ENCODE measurements at regions of chr11 and their contacts with region 1.

Region 1: GRCh38 chr11:114180301-114181055 is 115.7 kb upstream of the NNMT start:
- DNase-seq: peak; percentile 53
- H3K4me3 Mint-ChIP-seq: no peak overlapping the region
- H3K27ac Mint-ChIP-seq: no peak overlapping the region
- H3K4me1 Mint-ChIP-seq: peaks cover 64% of the 10 kb centered on the region
- H3K27me3 Mint-ChIP-seq: no peaks in the 10 kb centered on the region

Region 2: DNA sequence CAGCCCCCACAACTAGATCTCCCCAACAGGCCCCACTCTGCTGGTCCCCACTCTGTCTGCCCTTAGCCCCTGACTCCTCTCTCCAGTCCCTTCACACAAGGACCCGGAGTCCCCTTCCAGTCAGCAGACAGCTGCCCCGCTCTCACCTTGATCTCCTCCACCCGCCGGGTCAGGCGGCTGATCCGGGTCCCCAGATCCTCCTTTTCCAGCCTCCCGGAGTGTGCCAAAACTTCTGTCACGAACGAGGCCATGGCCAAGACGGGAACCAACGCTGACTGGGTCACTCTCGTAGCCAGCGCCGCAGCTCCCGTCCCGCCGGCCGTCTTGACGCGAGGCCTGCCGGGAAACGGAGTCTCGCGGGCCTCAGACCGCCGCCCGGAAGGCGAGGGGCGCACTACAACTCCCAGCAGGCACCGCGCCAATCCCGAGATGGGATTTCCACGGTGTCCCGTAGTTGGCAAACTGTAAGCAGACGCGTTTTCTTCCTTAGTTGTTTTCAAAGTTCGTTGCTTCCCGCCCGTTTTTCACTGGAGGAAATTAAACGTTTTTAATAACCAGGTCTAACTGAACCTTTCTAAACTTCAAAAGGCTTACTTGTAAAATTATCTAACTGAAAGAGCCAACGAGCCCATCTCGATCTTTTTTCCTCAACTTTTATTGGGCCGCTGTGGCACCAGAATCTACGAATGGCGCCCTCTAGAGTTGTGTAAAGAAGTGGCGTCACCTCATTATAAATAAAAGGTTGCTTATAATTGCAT is 406.9 kb before region 1 on chr11 and contains the start of gene ZW10:
- CTCF ChIA-PET with region 1: no interaction called
- intact Hi-C with region 1: loop called (anchors 5 kb)
- DNase-seq: peak; percentile 94
- H3K4me3 Mint-ChIP-seq: peak within 1 kb of the TSS; percentile 100
- H3K27ac Mint-ChIP-seq: peak within 1 kb of the TSS; percentile 96
- H3K4me1 Mint-ChIP-seq: peaks cover 19% of the 10 kb centered on the region
- H3K27me3 Mint-ChIP-seq: no peaks in the 10 kb centered on the region
- total RNA-seq, gene ZW10: 10.7 to 11.6 TPM

Region 3: GRCh38 chr11:113831314-113831713 is 349.2 kb before region 1 on chr11:
- CTCF ChIA-PET with region 1: no interaction called
- intact Hi-C with region 1: no loop called
- DNase-seq: no peak
- H3K4me3 Mint-ChIP-seq: no peak overlapping the region
- H3K27ac Mint-ChIP-seq: no peak overlapping the region
- H3K4me1 Mint-ChIP-seq: no peaks in the 10 kb centered on the region
- H3K27me3 Mint-ChIP-seq: no peaks in the 10 kb centered on the region

Region 4: DNA sequence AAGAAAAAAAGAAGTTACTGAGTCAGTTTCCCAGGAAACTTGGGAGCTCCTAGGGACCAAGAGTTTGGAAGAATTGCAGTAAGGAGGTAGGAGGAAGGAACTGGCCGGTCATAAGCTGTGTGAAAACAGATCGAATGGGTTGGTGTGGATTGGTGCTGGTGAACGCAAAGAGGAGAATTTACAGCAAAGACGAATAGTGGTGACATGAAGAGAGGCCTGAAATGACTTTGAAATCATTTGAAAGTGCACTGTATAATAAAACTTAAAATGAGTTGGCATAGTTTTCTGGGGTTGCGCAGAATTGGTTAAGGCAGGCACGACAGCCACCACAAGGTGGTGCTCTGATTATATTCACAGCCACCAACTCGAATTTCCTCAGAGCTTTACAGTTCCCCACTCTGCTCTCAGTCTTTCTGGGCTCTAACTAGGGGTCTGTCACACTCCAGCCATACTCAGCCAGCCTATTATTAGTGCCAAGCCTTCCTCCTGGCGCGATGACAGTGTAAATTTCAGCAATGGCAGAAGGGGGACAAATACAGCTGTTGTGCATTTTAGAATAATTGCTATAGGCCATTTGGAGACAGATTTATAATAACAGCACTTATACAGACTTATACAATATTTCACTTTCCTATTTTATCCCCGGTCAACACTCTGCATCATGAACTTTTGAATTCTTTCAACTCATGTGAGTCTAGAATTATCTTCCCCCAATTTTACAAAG is 284.2 kb before region 1 on chr11:
- CTCF ChIA-PET with region 1: interaction called, 16 read pairs
- intact Hi-C with region 1: no loop called
- DNase-seq: peak; percentile 54
- H3K4me3 Mint-ChIP-seq: no peak overlapping the region
- H3K27ac Mint-ChIP-seq: no peak overlapping the region
- H3K4me1 Mint-ChIP-seq: no peaks in the 10 kb centered on the region
- H3K27me3 Mint-ChIP-seq: no peaks in the 10 kb centered on the region

Region 5: GRCh38 chr11:114036156-114036811 is 144.2 kb before region 1 on chr11:
- CTCF ChIA-PET with region 1: interaction called, 22 read pairs
- intact Hi-C with region 1: loop called (anchors 1 kb)
- DNase-seq: peak; percentile 67
- H3K4me3 Mint-ChIP-seq: no peak overlapping the region
- H3K27ac Mint-ChIP-seq: no peak overlapping the region
- H3K4me1 Mint-ChIP-seq: peaks cover 2% of the 10 kb centered on the region
- H3K27me3 Mint-ChIP-seq: no peaks in the 10 kb centered on the region

Region 6: DNA sequence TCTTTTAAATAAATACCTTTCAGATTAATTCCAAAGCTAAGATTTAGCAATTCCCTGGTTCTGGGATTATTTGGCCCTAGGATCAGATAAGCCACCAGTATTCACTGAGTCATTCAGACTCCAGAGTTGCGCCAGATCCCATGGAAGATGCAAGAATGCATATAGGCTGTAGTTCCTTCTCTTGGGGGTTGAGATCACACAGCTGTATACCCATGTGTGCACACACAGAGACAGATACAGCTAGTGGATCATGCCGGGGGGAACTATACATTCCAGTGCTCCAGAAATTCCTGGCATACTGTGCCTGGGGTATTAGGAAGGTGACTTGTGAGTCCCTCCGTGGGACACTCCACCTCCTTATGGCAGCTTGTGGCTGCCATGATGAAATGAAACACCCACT is 45.6 kb before region 1 on chr11:
- CTCF ChIA-PET with region 1: no interaction called
- intact Hi-C with region 1: no loop called
- DNase-seq: no peak
- H3K4me3 Mint-ChIP-seq: no peak overlapping the region
- H3K27ac Mint-ChIP-seq: no peak overlapping the region
- H3K4me1 Mint-ChIP-seq: peaks cover 44% of the 10 kb centered on the region
- H3K27me3 Mint-ChIP-seq: no peaks in the 10 kb centered on the region

Region 7: GRCh38 chr11:114159802-114160632 is 20.5 kb before region 1 on chr11:
- CTCF ChIA-PET with region 1: interaction called, 4 read pairs
- intact Hi-C with region 1: loop called (anchors 1 kb)
- DNase-seq: peak; percentile 96
- H3K4me3 Mint-ChIP-seq: peak overlapping the region; percentile 25
- H3K27ac Mint-ChIP-seq: peak overlapping the region; percentile 50
- H3K4me1 Mint-ChIP-seq: peaks cover 78% of the 10 kb centered on the region
- H3K27me3 Mint-ChIP-seq: no peaks in the 10 kb centered on the region

Region 8: DNA sequence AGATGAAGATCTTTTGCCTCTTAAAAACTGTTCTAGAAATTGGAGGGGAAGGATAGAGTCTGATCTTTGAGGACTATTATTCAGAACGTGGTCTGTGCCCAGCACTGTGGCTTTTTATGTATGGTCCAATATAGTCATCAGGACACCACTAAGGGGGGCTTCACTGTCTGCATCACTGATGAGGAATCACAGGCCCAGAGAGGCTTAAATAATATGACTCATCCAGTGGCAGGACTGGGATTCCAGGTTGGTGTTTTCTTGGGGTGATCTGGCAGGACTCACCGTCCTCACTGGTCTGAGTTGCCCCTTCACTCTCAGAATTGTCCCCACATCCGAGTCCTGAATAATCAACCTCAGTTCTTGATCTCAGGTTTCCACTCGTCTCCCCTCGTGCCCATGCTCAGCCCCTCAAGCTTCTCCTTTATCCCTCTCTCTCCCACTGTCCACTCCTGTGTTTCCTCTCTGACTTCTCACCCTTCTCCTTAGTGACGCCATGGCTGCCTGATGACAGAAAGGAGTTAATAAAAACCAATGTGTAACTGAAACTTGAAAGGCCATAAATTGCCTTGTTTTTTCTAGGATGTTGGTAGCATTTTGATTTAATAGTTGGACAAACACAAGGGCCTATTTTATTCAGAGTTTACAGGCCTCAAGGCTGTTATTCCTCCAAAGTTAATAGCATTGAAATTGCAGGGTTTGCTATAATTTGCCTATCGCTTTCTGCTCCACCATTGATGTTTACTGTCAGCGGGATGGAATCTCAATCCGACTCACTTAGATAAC is 20.1 kb after region 1 on chr11:
- CTCF ChIA-PET with region 1: no interaction called
- intact Hi-C with region 1: no loop called
- DNase-seq: no peak
- H3K4me3 Mint-ChIP-seq: no peak overlapping the region
- H3K27ac Mint-ChIP-seq: no peak overlapping the region
- H3K4me1 Mint-ChIP-seq: no peaks in the 10 kb centered on the region
- H3K27me3 Mint-ChIP-seq: no peaks in the 10 kb centered on the region

Region 9: GRCh38 chr11:114280696-114281095 is 100.2 kb after region 1 on chr11:
- CTCF ChIA-PET with region 1: no interaction called
- intact Hi-C with region 1: no loop called
- DNase-seq: peak; percentile 47
- H3K4me3 Mint-ChIP-seq: no peak overlapping the region
- H3K27ac Mint-ChIP-seq: no peak overlapping the region
- H3K4me1 Mint-ChIP-seq: no peaks in the 10 kb centered on the region
- H3K27me3 Mint-ChIP-seq: peaks cover 5% of the 10 kb centered on the region

Measured in activated naive CD4-positive, alpha-beta T cell treated with anti-CD3 and anti-CD28 coated beads for 36 hours (primary cell).